H1 (cell line): ENCODE measurements at regions of chr5 and their contacts with region 1.

Region 1: DNA sequence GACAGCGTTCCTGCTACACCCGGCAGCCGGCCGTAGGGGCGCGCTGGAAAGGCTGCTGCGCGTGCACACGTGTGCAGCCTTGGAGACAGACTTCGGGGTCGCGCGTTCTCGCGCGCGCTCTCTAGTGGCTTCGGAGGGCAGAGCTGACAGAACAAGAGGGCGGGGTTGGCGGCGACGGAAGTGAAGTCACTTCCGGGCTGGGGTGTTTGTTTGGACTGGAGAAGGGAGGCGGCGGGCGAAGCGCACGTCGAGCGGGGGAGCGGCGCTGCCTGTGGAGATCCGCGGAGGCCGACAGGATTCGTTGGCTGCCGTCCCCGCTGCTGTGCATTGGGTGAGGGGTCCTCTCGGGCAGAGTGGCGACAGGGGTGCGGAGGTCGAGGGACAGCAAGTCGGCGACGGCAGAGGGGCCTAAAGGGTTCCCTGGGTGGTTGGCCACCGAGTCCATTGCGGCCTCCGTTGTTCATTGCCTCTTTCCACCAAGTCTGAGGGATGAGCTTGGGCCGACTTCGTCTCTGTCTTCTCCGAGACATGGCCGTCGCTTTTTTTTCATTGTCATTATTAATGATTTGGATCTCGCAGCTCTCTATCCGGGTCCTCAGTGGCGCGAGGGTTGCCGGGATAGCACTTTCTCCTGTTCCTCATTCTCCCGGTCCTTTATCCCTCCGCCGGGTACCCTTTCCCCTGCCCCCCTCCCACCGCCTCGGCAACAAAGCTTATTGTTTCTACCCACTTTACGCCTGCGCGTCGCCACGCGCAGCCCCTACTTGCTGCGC is at the start of gene PAIP2:
- DNase-seq: peak; percentile 92 to 97
- H3K4me3 ChIP-seq: peak within 1 kb of the TSS; percentile 82 to 94 (median 88)
- H3K27ac ChIP-seq: peak within 1 kb of the TSS; percentile 99
- H3K4me1 ChIP-seq: peaks cover 0 to 7% (median under 1%) of the 10 kb centered on the region in 4 experiments; a peak in 4 of 7 replicates
- H3K27me3 ChIP-seq: no peaks in the 10 kb centered on the region
- CTCF ChIP-seq: peak; percentile 65 to 89 (median 77)
- EP300 ChIP-seq: peak in 1 of 2 experiments; percentile 56; a peak in 1 of 3 replicates
- POLR2A ChIP-seq: peak; percentile 95 to 96
- RAD21 ChIP-seq: peak; percentile 36 to 49
- total RNA-seq, gene PAIP2: 157 and 162 TPM in 2 replicates

Region 2: GRCh38 chr5:139293504-139294373 is 48.1 kb before region 1 on chr5 and contains the start of gene MATR3:
- CTCF ChIA-PET with region 1: interaction called, 7 read pairs
- POLR2A ChIA-PET with region 1: interaction called, 163 read pairs
- DNase-seq: peak; percentile 91 to 95
- H3K4me3 ChIP-seq: peak within 1 kb of the TSS; percentile 83 to 99 (median 95)
- H3K27ac ChIP-seq: peak within 1 kb of the TSS; percentile 98
- H3K4me1 ChIP-seq: peaks cover 0 to 25% (median 7%) of the 10 kb centered on the region in 4 experiments; a peak in 5 of 7 replicates
- H3K27me3 ChIP-seq: no peaks in the 10 kb centered on the region
- CTCF ChIP-seq: no peak
- EP300 ChIP-seq: no peak
- POLR2A ChIP-seq: peak; percentile 97 to 99
- RAD21 ChIP-seq: no peak
- total RNA-seq, gene MATR3: 378 and 389 TPM in 2 replicates

Region 3: DNA sequence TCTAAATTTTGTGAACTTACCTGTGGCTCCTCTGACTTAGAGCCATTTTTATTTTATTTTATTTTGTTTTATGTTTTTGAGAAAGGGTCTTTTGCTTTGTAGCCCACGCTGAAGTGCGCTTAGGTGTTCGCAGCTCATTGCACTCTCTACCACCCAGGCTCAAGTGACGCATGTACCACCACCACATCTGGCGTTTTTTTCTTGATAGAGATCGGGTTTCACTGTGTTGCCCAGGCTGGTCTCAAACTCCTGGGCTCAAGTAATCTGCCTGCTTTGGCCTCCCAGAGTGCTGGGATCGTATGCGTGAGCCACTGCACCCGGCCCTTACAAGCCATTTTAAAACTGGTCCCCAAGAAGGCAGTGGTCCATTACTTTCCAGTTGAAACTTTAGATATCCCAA is 29.8 kb before region 1 on chr5:
- CTCF ChIA-PET with region 1: interaction called, 7 read pairs
- POLR2A ChIA-PET with region 1: interaction called, 163 read pairs
- DNase-seq: no peak
- H3K4me3 ChIP-seq: 0 out of 8 replicates have a peak overlapping the region, but pooled peaks of 1 of the 4 experiments have one; percentile 5
- H3K27ac ChIP-seq: no peak overlapping the region
- H3K4me1 ChIP-seq: peaks cover 0 to 10% (median 5%) of the 10 kb centered on the region in 4 experiments; a peak in 6 of 7 replicates
- H3K27me3 ChIP-seq: no peaks in the 10 kb centered on the region
- CTCF ChIP-seq: no peak
- EP300 ChIP-seq: no peak
- POLR2A ChIP-seq: no peak
- RAD21 ChIP-seq: no peak

Region 4: GRCh38 chr5:139371482-139372435 is 29.9 kb after region 1 on chr5:
- CTCF ChIA-PET with region 1: interaction called, 3 read pairs
- POLR2A ChIA-PET with region 1: interaction called, 13 read pairs
- DNase-seq: no peak
- H3K4me3 ChIP-seq: no peak overlapping the region
- H3K27ac ChIP-seq: no peak overlapping the region
- H3K4me1 ChIP-seq: no peaks in the 10 kb centered on the region
- H3K27me3 ChIP-seq: no peaks in the 10 kb centered on the region
- CTCF ChIP-seq: no peak
- EP300 ChIP-seq: no peak
- POLR2A ChIP-seq: no peak
- RAD21 ChIP-seq: no peak

Region 5: DNA sequence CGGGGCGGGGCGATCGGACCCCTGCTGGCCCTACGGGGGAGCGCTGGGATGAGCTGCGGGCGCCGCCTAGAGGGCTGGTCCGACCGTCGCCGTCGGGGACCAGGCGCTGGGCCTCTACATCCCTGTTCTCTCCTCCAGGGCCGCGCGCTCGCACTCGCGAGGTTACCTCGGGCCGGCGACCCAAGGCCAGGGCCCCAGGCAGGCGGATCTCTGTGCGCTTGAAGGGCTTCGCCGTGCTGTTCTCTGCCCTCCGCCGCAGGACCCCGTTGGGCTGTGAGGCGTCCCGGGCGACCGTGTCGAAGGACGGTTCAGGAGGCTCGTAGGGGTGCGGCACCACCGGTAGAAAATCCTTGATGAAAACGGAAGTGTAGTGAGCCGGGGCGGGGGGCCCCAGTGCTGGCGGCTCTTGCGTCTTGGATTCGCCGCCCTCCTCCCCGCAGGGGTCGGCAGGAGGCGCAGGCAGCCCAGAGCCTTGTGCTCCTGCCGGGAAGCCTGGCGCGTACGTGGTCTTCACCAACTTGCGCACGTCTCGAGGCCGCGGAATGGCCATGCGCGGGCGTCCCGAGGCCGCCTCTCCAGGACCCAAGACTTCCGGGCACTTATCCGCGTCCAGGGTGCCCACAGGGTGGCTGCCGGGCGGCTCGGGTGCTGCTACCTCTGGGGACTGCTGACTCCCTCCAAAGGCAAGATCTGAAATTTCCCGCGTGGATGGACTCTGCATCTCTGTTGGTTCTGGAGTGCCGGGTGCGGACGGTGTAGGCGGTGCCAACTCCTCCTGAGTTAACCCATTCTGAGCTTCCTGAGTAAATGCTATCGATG is 51.1 kb after region 1 on chr5:
- CTCF ChIA-PET with region 1: interaction called, 7 read pairs
- POLR2A ChIA-PET with region 1: interaction called, 11 read pairs
- DNase-seq: peak in 1 of 2 experiments; percentile 94
- H3K4me3 ChIP-seq: peak overlapping the region; percentile 42 to 68 (median 54)
- H3K27ac ChIP-seq: no peak overlapping the region
- H3K4me1 ChIP-seq: peaks cover 3 to 39% (median 21%) of the 10 kb centered on the region in 4 experiments
- H3K27me3 ChIP-seq: peaks cover 14 to 34% (median 28%) of the 10 kb centered on the region in 4 experiments; a peak in 6 of 7 replicates
- CTCF ChIP-seq: peak in 2 of 3 experiments; percentile 74 to 92; a peak in 3 of 4 replicates
- EP300 ChIP-seq: peak in 1 of 2 experiments; percentile 3; a peak in 1 of 3 replicates
- POLR2A ChIP-seq: peak in 1 of 2 experiments; percentile 52; a peak in 2 of 3 replicates
- RAD21 ChIP-seq: peak; percentile 65 to 87

Region 6: DNA sequence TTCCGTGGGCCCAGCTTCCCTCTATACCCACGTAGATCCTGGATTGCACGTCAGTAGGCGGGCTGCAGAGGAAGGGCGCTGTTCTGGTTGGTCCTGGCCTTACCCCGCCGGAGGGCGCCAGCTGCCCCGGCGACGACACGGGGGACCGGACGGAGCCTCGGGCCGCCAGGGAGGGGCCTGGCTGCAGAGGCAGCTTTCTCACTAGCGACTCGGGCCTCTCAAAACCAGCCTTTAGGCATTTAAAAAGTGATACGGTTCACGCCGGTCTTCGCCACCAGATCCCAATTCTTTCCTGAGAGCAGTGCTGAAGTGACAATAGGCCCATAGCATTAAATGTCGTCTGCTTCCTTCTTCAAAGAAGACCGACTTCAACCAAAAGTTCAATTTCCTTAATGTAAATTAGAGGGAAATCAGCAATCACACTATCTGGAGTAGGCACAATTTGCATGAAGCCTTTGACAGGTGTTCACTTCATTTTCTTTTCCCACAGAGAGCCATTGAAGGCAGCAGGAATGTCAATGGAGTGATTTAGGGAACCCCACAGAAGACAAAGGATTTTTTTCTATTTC is 201.7 kb after region 1 on chr5:
- CTCF ChIA-PET with region 1: no interaction called
- POLR2A ChIA-PET with region 1: no interaction called
- DNase-seq: peak in 1 of 2 experiments; percentile 83
- H3K4me3 ChIP-seq: peak overlapping the region in 2 of 4 experiments; percentile 17 to 44; a peak in 5 of 8 replicates
- H3K27ac ChIP-seq: no peak overlapping the region; the same call in 1 of the 2 replicates
- H3K4me1 ChIP-seq: peaks cover 0 to 10% (median 1%) of the 10 kb centered on the region in 4 experiments; a peak in 3 of 7 replicates
- H3K27me3 ChIP-seq: no peaks in the 10 kb centered on the region
- CTCF ChIP-seq: peak; percentile 47 to 70 (median 60)
- EP300 ChIP-seq: no peak
- POLR2A ChIP-seq: no peak
- RAD21 ChIP-seq: peak; percentile 42 to 57